Activated CD8-positive, alpha-beta T cell treated with anti-CD3 and anti-CD28 coated beads, Interleukin-2, amount 10 ng/mL, durations not matched to agents 7 days and 5 days (primary cell): ENCODE measurements at regions of chr22 and their contacts with region 1.

Region 1: DNA sequence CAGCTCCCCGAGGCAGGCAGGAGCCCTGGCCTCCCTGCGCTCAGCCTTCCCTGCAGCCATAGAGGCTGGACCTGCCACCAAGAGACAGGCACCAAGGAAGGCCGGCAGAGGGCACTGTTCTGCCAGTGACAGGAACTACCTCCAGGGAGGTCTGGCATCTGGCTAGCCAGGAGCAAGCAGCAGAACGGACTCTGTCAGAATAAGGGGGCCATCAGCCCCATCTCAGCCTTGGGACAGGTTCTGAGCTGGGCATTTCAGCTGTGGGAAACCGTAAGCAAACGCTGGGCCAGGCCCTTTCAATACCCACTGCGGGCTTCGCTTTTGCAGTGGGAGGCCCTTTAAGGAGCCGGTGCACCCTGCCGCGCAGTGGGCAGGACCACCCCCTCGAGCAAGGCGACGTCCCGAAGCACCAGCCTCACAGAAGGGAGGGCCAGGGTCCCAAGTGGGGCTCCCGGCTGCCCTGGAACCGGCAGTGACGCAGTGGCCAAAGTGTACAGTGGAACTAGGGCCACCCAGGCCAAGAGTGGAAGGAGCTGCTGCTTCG is 18.2 kb downstream of the IFT27 start:
- DNase-seq: peak; percentile 85
- ATAC-seq: peak; percentile 88
- H3K4me3 Mint-ChIP-seq: no peak overlapping the region
- H3K27ac Mint-ChIP-seq: no peak overlapping the region
- H3K4me1 Mint-ChIP-seq: no peaks in the 10 kb centered on the region
- H3K27me3 Mint-ChIP-seq: peaks cover 4% of the 10 kb centered on the region

Region 2: DNA sequence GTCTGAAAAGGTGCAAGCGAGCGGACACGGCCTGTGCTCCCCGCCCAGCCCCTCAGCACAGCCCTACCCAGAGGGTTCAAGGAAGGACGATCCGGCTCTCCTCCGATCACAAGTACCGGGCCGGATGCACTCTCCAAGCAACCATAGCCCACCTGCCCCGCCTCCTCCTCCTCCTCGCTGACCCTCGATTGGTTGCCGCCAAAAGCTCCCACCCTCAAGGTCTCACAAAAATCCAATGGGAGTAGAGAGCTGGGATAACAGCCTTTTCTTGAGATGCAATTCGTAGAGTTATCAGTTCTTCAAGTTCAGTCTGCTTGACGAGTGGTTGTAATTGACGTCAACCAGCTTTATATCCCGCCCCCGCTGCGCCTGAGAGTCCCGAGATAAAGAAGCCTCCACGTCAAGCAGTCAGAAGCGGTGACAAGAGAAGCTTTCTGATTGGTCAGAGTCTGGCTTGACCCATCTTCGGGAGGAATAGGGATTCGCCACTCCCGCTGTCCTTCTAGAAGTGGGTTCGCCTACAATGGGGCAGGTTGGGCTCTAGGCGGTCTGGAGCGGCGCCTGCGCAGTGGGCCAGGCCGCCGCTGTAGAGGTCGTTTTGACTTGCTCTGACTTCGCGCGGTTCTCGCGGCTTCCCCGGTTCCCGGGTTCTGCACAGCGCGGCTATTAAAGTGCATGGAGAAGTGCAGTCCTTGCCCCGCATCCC is 18.4 kb after region 1 on chr22 and contains the start of gene IFT27:
- CTCF ChIA-PET with region 1: interaction called, 64 read pairs
- POLR2A ChIA-PET with region 1: no interaction called
- DNase-seq: peak; percentile 99
- ATAC-seq: peak; percentile 95
- H3K4me3 Mint-ChIP-seq: peak within 1 kb of the TSS; percentile 80
- H3K27ac Mint-ChIP-seq: peak within 1 kb of the TSS; percentile 91
- H3K4me1 Mint-ChIP-seq: peaks cover 31% of the 10 kb centered on the region
- H3K27me3 Mint-ChIP-seq: no peaks in the 10 kb centered on the region
- total RNA-seq, gene IFT27: 26.5 to 27.2 TPM

Region 3: GRCh38 chr22:36806835-36807234 is 49.1 kb after region 1 on chr22:
- CTCF ChIA-PET with region 1: interaction called, 10 read pairs
- POLR2A ChIA-PET with region 1: no interaction called
- DNase-seq: no peak
- ATAC-seq: no peak
- H3K4me3 Mint-ChIP-seq: no peak overlapping the region
- H3K27ac Mint-ChIP-seq: peak overlapping the region; percentile 47
- H3K4me1 Mint-ChIP-seq: peaks cover 32% of the 10 kb centered on the region
- H3K27me3 Mint-ChIP-seq: peaks cover 11% of the 10 kb centered on the region